Colonic mucosa (tissue), 4 donors: ENCODE measurements at regions of chr17 and their contacts with region 1.

Region 1: GRCh38 chr17:59558977-59559376 is 6.4 kb upstream of the DHX40 start:
- DNase-seq: no peak
- H3K4me3 ChIP-seq: no peak overlapping the region
- H3K27ac ChIP-seq: no peak overlapping the region
- H3K4me1 ChIP-seq: no peaks in the 10 kb centered on the region
- H3K27me3 ChIP-seq: no peaks in the 10 kb centered on the region
- CTCF ChIP-seq: no peak

Region 2: DNA sequence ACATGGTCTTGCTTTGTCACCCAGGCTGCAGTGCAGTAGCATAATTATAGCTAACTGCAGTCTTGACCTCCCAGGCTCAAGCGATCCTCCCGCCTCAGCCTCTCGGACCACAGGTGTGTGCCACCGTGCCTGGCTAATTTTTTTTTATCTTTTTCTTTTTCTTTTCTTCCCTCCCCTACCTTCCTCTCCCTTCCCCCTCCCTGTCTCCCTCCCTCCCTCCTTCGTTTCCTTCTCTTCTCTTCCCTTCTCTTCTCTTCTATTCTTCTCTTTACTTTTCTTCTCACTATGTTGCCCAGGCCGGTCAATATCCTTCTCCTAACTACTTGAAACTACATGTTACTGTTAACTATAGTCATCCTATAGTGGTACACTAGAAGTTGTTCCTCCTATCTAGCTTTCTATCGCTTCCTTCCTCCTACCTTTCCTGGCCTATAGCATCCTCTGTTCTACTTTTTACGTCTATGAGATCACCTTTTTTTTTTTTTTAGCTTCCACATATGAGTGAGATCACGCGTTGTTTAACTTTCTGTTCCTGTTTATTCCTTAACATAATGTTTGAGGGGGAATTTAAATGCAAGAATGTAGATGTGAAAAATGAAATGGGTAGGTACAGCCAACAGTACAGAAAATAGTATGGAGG is 258.2 kb before region 1 on chr17:
- intact Hi-C with region 1: loop called (anchors 10 kb)
- DNase-seq: no peak
- H3K4me3 ChIP-seq: no peak overlapping the region
- H3K27ac ChIP-seq: no peak overlapping the region
- H3K4me1 ChIP-seq: no peaks in the 10 kb centered on the region
- H3K27me3 ChIP-seq: no peaks in the 10 kb centered on the region
- CTCF ChIP-seq: no peak